Activated CD4-positive, alpha-beta T cell treated with anti-CD3 and anti-CD28 coated beads for 36 hours (primary cell): ENCODE measurements at regions of chr4 and their contacts with region 1.

Region 1: DNA sequence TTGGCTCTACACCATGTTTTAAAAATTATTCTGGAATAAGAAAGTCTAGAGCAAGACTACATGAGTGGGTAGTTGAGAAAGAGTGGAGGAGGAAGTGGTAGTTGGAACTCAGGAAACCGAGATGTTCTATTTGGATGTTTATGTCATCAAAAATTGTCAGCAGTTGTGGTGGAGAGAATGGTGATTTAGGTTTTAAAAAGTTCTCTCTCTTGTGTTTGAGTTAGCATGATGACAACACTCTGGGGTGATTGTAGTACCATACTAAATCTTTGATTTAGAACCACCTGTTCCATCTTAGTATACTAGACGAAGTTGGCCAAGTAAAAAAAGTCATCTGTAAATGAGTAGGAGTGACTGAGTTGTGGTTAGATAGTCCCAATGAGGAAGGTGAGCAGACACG is 40.7 kb downstream of the KLHL2 start:
- DNase-seq: no peak
- ATAC-seq: peak; percentile 54
- H3K4me3 Mint-ChIP-seq: no peak overlapping the region
- H3K27ac Mint-ChIP-seq: no peak overlapping the region
- H3K4me1 Mint-ChIP-seq: peaks cover 12% of the 10 kb centered on the region
- H3K27me3 Mint-ChIP-seq: no peaks in the 10 kb centered on the region

Region 2: GRCh38 chr4:165207431-165208220 is 40.5 kb before region 1 on chr4 and contains the start of gene KLHL2:
- CTCF ChIA-PET with region 1: no interaction called
- POLR2A ChIA-PET with region 1: no interaction called
- intact Hi-C with region 1: loop called in 1 of 2 experiments (anchors 10 kb)
- DNase-seq: peak; percentile 82
- ATAC-seq: peak; percentile 65
- H3K4me3 Mint-ChIP-seq: peak within 1 kb of the TSS; percentile 86
- H3K27ac Mint-ChIP-seq: peak within 1 kb of the TSS; percentile 89
- H3K4me1 Mint-ChIP-seq: peaks cover 68% of the 10 kb centered on the region
- H3K27me3 Mint-ChIP-seq: no peaks in the 10 kb centered on the region
- total RNA-seq, gene KLHL2: 20.9 to 22.1 TPM